Dorsolateral prefrontal cortex (tissue), 120 donors: ENCODE measurements at regions of chr17 and their contacts with region 1.

Region 1: DNA sequence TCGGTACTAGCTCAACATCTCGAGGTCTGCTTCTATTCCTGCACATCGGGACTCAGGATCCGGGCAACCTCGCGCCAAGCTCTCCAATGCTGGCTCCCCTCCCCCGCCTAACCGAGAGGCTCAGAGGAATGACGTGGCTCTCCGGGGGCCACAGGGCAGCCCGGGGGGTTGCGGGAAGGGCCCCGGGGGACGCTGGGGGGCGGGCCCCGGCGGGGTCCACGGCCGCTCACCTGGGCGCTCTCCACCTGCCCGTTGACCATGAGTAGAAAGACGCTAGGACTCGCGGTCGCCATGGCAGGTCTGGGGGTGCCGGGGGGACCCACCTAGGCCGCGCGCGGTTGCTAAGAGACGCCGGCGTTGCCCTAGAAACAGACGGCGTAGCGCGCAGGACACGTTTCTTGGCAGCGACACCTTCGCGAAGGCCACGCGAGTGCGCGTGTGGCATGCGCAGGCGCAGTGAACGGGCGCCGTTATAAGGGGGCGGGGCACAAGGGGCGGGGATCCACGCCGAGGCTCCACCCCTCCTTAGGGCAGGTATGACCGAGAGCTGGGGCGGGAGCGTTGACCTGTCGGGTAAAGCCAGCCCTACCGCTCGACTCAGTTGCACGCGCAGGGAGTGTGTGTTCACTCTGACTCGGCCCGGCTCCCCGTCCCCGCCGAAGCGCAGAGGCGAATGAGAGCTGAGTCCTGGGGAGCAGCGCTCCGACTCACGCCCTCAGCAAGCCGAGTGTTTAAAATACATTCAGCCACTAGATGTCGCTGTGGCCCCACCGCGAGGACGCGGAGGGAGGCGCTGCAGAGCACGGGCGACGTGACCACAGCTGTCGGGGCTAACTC is at the start of gene B9D1:
- DNase-seq: peak; percentile 88 to 96 (median 92)
- H3K4me3 ChIP-seq: peak within 1 kb of the TSS; percentile 57 to 98 (median 82)
- H3K27ac ChIP-seq: peak within 1 kb of the TSS in 58 of 59 donors; percentile 44 to 96 (median 89)
- H3K27me3 ChIP-seq: no peaks in the 10 kb centered on the region
- CTCF ChIP-seq: peak; percentile 97 to 100 (median 100)
- total RNA-seq, gene B9D1: 10.3 to 48.5 (median 28.0) TPM

Region 2: GRCh38 chr17:19317359-19318095 is 45.0 kb before region 1 on chr17:
- intact Hi-C with region 1: loop called in 1 of 2 experiments (anchors 5 kb)
- DNase-seq: peak; percentile 86 to 98 (median 97)
- H3K4me3 ChIP-seq: peak overlapping the region in 21 of 59 donors; percentile 0 to 33 (median 17)
- H3K27ac ChIP-seq: peak overlapping the region; percentile 81 to 100 (median 96)
- H3K27me3 ChIP-seq: no peaks in the 10 kb centered on the region
- CTCF ChIP-seq: peak in 54 of 56 donors; percentile 13 to 77 (median 54)

Region 3: GRCh38 chr17:19377602-19378392 is 15.3 kb after region 1 on chr17:
- intact Hi-C with region 1: loop called in 1 of 2 experiments (anchors 2 kb)
- DNase-seq: peak; percentile 97 to 100 (median 98)
- H3K4me3 ChIP-seq: peak overlapping the region; percentile 67 to 99 (median 87)
- H3K27ac ChIP-seq: peak overlapping the region; percentile 79 to 99 (median 96)
- H3K27me3 ChIP-seq: no peaks in the 10 kb centered on the region
- CTCF ChIP-seq: peak in 52 of 56 donors; percentile 7 to 70 (median 40)

Region 4: DNA sequence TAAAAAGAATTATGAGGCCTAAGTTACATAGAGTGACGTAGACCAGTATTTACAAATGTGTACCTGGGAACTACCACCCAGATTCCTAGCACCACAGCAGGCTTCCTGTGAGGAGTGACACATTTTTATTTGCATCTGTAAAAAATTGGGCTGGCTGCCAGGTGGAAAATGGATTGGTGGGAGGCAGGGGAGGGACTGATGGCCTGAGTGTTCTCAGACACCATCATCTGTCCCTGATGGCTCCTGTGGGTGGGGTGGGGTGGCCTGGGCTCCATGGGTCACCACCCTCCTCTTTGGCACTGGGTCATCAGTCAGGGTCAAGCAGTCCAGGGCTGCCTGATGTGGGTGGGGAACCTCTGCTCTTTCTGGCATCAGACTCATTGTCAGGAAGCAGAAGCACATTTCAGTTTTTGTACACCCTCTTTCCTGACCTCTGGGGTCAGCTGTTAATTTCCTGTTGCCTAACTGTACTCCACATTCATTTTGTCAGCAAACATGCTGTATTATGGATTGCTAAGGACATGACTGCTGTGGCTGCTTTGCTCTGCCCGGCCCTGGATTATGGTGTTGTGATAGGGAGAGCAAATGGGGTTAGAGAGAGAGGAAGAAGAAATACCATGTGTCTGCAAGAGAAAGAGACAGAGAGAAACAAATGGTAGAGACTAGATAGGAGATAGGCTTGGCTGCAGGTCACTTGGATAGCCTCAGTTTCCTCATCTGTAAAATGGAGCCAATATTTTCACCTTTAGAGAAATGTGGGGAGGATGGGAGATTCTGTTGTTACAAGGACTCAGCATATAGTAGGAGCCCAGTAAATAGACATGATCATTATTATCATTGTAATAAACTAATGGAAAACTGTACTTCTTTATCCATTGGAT is 36.0 kb after region 1 on chr17:
- intact Hi-C with region 1: no loop called
- DNase-seq: peak in 1 of 10 donors; percentile 9
- H3K4me3 ChIP-seq: no peak overlapping the region
- H3K27ac ChIP-seq: no peak overlapping the region
- H3K27me3 ChIP-seq: no peaks in the 10 kb centered on the region
- CTCF ChIP-seq: no peak

Region 5: GRCh38 chr17:19447085-19447583 is 84.6 kb after region 1 on chr17:
- intact Hi-C with region 1: loop called (anchors 1 to 2 kb)
- DNase-seq: peak in 9 of 10 donors; percentile 56 to 84 (median 65)
- H3K4me3 ChIP-seq: peak overlapping the region in 6 of 59 donors; percentile 2 to 42 (median 20)
- H3K27ac ChIP-seq: peak overlapping the region; percentile 8 to 97 (median 92)
- H3K27me3 ChIP-seq: no peaks in the 10 kb centered on the region
- CTCF ChIP-seq: peak; percentile 94 to 100 (median 98)

Region 6: GRCh38 chr17:19507775-19508576 is 145.5 kb after region 1 on chr17:
- intact Hi-C with region 1: loop called (anchors 2 to 5 kb)
- DNase-seq: peak; percentile 83 to 96 (median 88)
- H3K4me3 ChIP-seq: peak overlapping the region; percentile 41 to 88 (median 72)
- H3K27ac ChIP-seq: peak overlapping the region; percentile 68 to 97 (median 93)
- H3K27me3 ChIP-seq: no peaks in the 10 kb centered on the region
- CTCF ChIP-seq: peak in 29 of 56 donors; percentile 6 to 53 (median 28)

Region 7: DNA sequence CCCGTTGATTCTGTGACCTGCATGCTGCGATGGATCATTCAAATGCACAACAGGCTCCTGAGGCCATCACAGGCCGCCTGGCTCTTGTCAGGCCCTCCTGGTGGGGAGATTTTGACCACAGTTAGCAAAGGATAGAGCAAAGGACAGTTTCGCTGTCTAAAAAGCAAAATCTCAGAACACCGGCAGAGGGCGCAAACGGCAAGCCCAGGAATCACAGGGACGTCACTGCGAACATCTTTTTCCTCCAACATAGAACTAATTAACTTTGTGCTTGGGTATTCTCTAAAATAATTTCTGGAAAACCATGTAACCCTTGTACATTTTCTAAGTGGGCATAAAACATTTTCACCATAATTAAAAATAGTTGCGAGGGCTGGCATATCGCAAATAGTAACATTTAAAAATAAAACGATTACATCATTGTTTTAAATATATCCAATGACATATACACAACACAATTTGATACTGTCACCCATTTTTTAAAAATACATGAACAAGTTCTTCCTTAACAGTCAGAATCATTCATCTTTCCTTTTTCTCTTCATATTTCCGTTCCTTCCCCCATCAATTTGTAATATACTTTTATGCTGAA is 151.5 kb after region 1 on chr17:
- intact Hi-C with region 1: loop called (anchors 2 to 5 kb)
- DNase-seq: peak in 9 of 10 donors; percentile 59 to 81 (median 73)
- H3K4me3 ChIP-seq: peak overlapping the region in 34 of 59 donors; percentile 0 to 50 (median 22)
- H3K27ac ChIP-seq: peak overlapping the region in 51 of 59 donors; percentile 6 to 81 (median 59)
- H3K27me3 ChIP-seq: no peaks in the 10 kb centered on the region
- CTCF ChIP-seq: peak; percentile 80 to 97 (median 92)

Region 8: DNA sequence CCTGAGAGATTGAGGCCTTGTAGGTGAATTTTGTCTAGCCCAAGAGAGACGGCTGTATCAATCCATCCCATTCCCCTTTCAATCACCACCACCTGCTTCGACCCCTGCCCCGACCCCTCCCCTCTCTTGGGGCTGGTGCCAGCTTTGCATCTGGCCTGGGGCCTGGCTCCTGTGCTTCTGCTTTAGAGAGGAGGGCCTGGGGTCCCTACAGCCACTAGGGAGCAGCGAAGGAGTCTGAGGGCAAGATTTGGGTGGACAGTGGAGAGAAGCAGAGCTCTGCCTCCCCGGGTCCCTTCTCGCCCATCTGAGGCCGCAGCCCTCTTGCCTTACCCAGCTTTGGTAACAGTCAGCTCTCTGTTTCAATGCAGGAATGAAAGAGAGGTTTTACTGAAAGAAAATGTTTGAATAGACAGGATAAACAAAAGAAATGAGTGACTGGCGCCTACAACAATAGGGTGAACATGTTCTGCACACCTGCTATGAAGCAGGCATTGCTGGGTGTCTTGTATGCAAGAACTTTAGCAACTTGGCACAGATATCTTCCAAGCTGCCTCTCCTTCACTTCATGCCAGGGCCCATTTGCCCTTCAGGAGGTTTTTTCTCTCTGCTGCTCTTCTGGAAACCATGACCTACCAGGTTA is 228.5 kb after region 1 on chr17:
- intact Hi-C with region 1: no loop called
- DNase-seq: no peak
- H3K4me3 ChIP-seq: no peak overlapping the region
- H3K27ac ChIP-seq: no peak overlapping the region
- H3K27me3 ChIP-seq: no peaks in the 10 kb centered on the region
- CTCF ChIP-seq: no peak

Region 9: GRCh38 chr17:19766422-19767270 is 404.2 kb after region 1 on chr17:
- intact Hi-C with region 1: loop called (anchors 5 kb)
- DNase-seq: peak; percentile 77 to 91 (median 84)
- H3K4me3 ChIP-seq: peak overlapping the region in 4 of 59 donors; percentile 5 to 23 (median 8)
- H3K27ac ChIP-seq: peak overlapping the region in 9 of 59 donors; percentile 6 to 58 (median 39)
- H3K27me3 ChIP-seq: no peaks in the 10 kb centered on the region
- CTCF ChIP-seq: peak; percentile 71 to 99 (median 97)